Breast epithelium (tissue), 4 donors: ENCODE measurements at regions of chr2 and their contacts with region 1.

Region 1: GRCh38 chr2:202002381-202002780 is 31.3 kb upstream of the FZD7 start:
- DNase-seq: no peak
- H3K4me3 ChIP-seq: no peak overlapping the region
- H3K27ac ChIP-seq: no peak overlapping the region
- H3K4me1 ChIP-seq: no peaks in the 10 kb centered on the region
- H3K27me3 ChIP-seq: no peaks in the 10 kb centered on the region
- CTCF ChIP-seq: no peak
- POLR2A ChIP-seq: no peak

Region 2: GRCh38 chr2:201980389-201980831 is 22.0 kb before region 1 on chr2:
- intact Hi-C with region 1: loop called (anchors 2 kb)
- DNase-seq: peak in 1 of 2 donors; percentile 76
- H3K4me3 ChIP-seq: no peak overlapping the region
- H3K27ac ChIP-seq: peak overlapping the region; percentile 50 to 59
- H3K4me1 ChIP-seq: peaks cover 0 to 16% of the 10 kb centered on the region in 2 donors
- H3K27me3 ChIP-seq: no peaks in the 10 kb centered on the region
- CTCF ChIP-seq: no peak
- POLR2A ChIP-seq: no peak